ENCODE measurements at regions of chr6 and their contacts with region 1.

Region 1: DNA sequence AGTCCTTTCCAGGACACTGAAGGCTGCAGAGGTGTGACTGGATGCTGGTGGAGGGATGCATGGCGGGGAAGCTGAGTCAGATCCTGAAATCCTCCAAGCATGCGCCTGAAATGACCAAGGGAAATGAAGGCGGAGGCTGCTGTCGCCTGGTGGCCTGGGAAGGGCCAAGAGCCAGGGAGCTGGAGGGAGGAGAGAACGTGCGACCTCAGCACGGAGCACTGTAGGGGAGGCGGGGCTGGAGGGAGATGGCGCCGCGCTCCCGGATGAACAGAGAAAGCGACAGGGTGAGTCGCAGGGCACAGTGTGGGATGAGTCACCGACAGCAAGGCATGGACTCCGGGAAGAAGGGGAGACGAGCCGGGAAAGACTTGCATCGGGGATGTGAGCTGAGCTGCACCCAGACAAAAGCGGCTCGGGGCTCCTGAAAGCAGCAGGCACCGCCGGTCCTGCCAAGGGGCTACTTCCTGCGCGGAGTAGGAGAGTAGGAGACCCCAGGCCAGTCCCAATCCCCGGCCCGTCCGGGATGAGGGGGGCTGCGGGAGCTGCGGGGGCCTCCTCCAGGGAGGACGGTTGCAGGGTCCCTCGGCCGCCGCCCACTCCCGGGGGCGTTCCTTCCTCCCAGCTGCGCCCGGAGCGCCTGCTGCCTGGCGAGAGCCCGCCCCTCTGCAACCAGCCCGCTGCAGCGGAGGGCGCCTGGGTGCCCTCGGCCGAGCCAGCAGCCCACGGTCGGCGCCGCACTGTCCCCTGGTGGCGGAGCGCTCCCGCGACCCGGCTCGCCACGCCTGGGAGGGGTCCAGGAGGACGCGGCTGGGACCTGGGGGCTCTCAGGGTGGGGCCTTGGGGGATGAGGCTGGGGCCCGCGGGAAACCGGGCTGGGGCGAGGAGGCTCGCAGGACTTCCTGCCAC is 11.0 kb upstream of the NQO2 start:
- DNase-seq: peak; percentile 84 to 92
- H3K4me3 ChIP-seq: peak overlapping the region; percentile 52 to 70 (median 62)
- H3K27ac ChIP-seq: peak overlapping the region; percentile 99
- H3K4me1 ChIP-seq: peaks cover 8 to 26% (median 16%) of the 10 kb centered on the region in 4 experiments
- H3K27me3 ChIP-seq: no peaks in the 10 kb centered on the region
- CTCF ChIP-seq: peak; percentile 80 to 87 (median 82)
- EP300 ChIP-seq: peak in 1 of 2 experiments; percentile 2; a peak in 1 of 3 replicates
- POLR2A ChIP-seq: peak; percentile 68 to 94
- RAD21 ChIP-seq: peak; percentile 65 to 85

Region 2: DNA sequence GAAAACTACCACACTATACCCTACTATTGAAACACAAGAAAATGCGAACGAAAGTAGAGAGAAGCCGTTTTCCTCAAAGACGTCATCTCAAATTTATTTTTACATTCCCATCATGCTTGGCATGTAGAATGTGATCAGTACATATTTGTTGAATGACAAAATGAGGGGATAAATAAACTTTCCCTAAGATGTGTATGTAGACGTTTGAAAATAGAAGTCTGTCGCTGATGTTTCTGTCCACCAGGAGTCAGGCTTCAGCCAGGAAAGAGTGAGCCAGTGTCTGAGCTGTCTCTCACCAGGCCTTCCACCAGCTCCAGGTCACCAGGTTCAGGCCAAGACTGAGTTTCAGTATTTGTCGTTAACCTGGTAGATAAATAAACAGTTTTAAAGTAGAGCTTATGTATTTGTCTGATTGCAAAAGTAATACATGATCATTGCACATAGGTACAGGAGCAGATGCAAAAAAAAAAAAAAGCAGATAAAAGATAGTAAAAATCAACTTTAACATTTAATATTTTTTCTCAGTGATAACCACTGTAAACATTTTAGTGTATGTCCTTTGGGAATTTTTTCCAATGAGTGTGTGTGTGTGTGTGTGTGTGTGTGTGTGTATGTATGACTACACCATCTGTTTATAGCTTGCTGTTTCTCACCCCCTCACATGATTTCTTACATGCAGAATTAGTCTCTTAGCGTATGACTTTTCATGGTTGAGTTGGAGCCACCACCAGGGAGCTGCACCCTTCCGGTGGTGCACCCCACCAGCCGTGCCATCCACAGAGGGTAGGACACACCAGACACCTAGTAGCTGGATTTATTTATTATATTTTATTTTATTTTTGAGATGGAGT is 197.3 kb before region 1 on chr6:
- CTCF ChIA-PET with region 1: interaction called, 11 read pairs
- POLR2A ChIA-PET with region 1: interaction called, 3 read pairs
- DNase-seq: no peak
- H3K4me3 ChIP-seq: no peak overlapping the region
- H3K27ac ChIP-seq: no peak overlapping the region
- H3K4me1 ChIP-seq: no peaks in the 10 kb centered on the region; a peak in 1 of 7 replicates
- H3K27me3 ChIP-seq: no peaks in the 10 kb centered on the region
- CTCF ChIP-seq: peak; percentile 64 to 89 (median 88)
- EP300 ChIP-seq: no peak
- POLR2A ChIP-seq: no peak
- RAD21 ChIP-seq: peak; percentile 90 to 95

Region 3: DNA sequence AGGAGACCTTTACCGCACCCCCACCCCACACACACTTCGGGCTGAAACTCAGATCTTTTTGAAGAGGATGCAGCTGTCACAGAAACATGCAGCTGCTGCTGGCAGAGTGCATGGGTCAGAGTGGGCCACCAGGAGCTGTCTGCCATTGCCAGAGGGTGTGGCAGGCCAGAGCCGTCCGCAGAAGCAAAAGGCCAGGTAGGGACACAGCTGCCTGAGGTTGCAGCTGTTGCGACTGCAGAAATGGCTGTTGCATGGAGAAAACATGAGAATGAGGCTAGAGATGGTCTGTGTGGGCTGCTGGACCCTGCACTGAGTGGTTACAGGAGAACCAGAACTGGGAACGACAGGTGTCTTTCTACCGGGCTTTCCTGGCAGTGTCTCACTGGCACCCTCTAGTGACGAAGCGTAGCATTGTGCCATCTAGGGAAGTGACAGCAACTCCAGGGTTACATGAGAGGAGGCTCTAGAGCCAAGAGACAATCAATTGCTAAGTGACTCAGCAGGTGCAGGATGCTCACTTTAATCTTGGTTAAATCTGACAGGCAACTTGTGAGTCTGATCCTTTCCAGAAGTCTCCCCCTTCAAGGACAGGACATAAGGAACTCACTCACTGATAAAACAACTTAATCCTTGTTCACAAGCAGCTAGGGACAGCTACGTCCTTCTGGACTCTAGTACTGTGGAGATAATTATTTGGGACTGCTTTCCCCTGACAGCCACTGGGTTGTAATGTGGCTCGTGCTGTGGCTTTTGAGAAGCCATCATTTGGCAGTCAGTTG is 56.5 kb before region 1 on chr6:
- CTCF ChIA-PET with region 1: interaction called, 35 read pairs
- POLR2A ChIA-PET with region 1: interaction called, 7 read pairs
- DNase-seq: peak; percentile 78 to 96
- H3K4me3 ChIP-seq: no peak overlapping the region
- H3K27ac ChIP-seq: no peak overlapping the region
- H3K4me1 ChIP-seq: peaks cover 15 to 28% (median 19%) of the 10 kb centered on the region in 4 experiments
- H3K27me3 ChIP-seq: no peaks in the 10 kb centered on the region
- CTCF ChIP-seq: peak; percentile 89 to 100 (median 92)
- EP300 ChIP-seq: no peak
- POLR2A ChIP-seq: no peak
- RAD21 ChIP-seq: peak; percentile 93

Region 4: GRCh38 chr6:2952557-2953095 is 36.1 kb before region 1 on chr6:
- CTCF ChIA-PET with region 1: interaction called, 142 read pairs
- POLR2A ChIA-PET with region 1: interaction called, 17 read pairs
- DNase-seq: peak; percentile 89 to 97
- H3K4me3 ChIP-seq: no peak overlapping the region; a peak in 1 of 8 replicates
- H3K27ac ChIP-seq: no peak overlapping the region
- H3K4me1 ChIP-seq: peaks cover 0 to 7% (median 3%) of the 10 kb centered on the region in 4 experiments; a peak in 6 of 7 replicates
- H3K27me3 ChIP-seq: no peaks in the 10 kb centered on the region
- CTCF ChIP-seq: peak; percentile 79 to 99 (median 89)
- EP300 ChIP-seq: no peak
- POLR2A ChIP-seq: no peak
- RAD21 ChIP-seq: peak; percentile 60 to 74

Region 5: DNA sequence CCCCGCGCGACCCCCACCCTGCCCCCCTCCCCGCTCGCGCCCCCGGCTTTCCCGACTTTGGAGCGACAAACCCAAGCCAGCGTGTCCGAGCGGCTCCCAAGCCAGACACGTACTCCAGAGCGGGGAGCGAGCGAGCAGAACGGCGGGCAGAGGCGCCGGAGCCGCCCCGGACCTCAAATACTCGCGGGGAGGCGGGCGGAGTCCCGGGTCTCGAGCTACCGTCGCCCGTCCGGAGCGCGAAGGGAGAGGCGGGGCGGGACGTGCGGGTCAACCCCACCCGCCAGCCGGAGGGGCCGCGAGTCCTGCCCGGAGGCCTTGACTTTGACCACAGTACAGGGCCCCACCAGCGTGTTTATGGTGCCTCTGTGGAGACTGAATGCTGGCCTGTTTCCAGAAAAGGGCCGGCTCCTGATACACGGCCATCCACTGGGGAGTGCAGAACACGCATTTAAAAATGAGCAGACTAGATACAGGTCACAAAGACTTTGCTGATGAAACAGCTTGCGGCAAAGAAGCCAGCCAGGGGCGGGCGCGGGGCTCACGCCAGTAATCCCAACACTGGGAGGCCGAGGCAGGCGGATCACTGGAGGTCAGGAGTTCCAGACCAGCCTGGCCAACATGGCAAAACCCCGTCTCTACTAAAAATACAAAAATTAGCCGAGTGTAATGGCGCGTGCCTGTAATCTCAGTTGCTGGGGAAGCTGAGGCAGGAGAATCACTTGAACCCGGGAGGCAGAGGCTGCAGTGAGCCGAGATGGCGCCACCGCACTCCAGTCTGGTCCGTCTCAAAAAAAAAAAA is 17.1 kb before region 1 on chr6 and contains the start of gene SERPINB6:
- CTCF ChIA-PET with region 1: interaction called, 11 read pairs
- POLR2A ChIA-PET with region 1: interaction called, 10 read pairs
- DNase-seq: peak in 1 of 2 experiments; percentile 63
- H3K4me3 ChIP-seq: peak within 1 kb of the TSS; percentile 44 to 78 (median 62)
- H3K27ac ChIP-seq: no peak within 1 kb of the TSS
- H3K4me1 ChIP-seq: peaks cover 0 to 3% (median 0%) of the 10 kb centered on the region in 4 experiments; a peak in 2 of 7 replicates
- H3K27me3 ChIP-seq: peaks cover 0 to 2% (median 0%) of the 10 kb centered on the region in 4 experiments; a peak in 1 of 7 replicates
- CTCF ChIP-seq: no peak
- EP300 ChIP-seq: no peak
- POLR2A ChIP-seq: no peak
- RAD21 ChIP-seq: no peak
- total RNA-seq, gene SERPINB6: 29.4 and 31.2 TPM in 2 replicates

Region 6: DNA sequence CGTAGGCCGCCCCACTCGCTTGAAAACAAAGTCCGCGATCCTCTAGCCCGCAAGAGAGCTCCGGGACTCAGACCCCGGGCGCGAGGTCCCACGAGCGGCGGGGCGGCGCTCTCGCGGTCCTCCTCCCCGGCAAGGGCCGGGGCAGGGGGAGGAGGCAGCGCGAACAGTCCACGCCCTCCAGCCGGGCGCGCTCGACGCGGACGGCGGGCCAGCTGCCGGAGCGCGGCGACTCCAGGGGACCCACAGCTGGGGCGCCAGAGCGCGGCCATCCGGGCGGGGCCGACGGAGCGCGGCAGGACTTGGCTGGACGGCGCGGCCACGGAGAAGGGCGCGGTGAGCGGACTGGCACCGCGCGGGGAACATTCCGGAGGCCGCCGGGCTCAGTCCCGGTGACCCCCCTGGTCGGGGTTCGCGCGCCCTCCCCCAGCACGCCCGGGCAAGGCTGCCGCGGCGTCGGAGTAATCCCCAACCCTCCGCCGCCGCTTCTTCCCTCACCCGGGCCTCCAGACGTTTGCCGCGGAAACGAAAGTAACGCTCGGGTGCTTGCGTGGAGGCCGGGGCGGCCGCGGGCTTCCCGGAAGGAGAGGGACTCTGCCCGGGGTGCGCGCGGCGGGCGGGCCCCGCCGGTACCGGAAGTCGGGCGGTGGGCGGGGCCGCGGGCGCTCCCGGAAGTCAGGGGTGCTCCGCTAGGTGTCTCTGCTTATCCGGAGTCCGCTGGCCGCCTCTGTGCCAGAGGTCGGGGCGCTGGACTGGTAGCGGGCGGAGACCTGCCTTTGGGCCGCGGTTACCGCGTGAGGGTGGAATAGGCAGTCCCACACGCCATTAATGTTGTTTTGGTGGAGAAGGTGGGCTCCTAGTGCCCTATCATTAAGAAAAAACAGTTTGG is 79.9 kb after region 1 on chr6 and contains the start of gene RIPK1:
- CTCF ChIA-PET with region 1: interaction called, 6 read pairs
- POLR2A ChIA-PET with region 1: interaction called, 13 read pairs
- DNase-seq: peak in 1 of 2 experiments; percentile 91
- H3K4me3 ChIP-seq: peak within 1 kb of the TSS; percentile 72 to 88 (median 74)
- H3K27ac ChIP-seq: peak within 1 kb of the TSS; percentile 81; the same call in 1 of the 2 replicates
- H3K4me1 ChIP-seq: peaks cover 4 to 9% (median 6%) of the 10 kb centered on the region in 4 experiments; a peak in 5 of 7 replicates
- H3K27me3 ChIP-seq: no peaks in the 10 kb centered on the region
- CTCF ChIP-seq: peak in 2 of 3 experiments; percentile 29; a peak in 1 of 4 replicates
- EP300 ChIP-seq: no peak
- POLR2A ChIP-seq: peak; percentile 63 to 78
- RAD21 ChIP-seq: peak; percentile 26; a peak in 3 of 4 replicates
- total RNA-seq, gene RIPK1: 20.7 and 22.9 TPM in 2 replicates